Gastrocnemius medialis (tissue), 4 donors: ENCODE measurements at regions of chr6 and their contacts with region 1.

Region 1: GRCh38 chr6:7589949-7590917 is at the start of gene SNRNP48:
- DNase-seq: peak; percentile 92 to 93
- ATAC-seq: peak; percentile 99
- H3K4me3 ChIP-seq: peak within 1 kb of the TSS; percentile 77 to 96 (median 86)
- H3K27ac ChIP-seq: peak within 1 kb of the TSS; percentile 65 to 82 (median 77)
- H3K4me1 ChIP-seq: peaks cover 21 to 23% of the 10 kb centered on the region in 2 donors
- H3K27me3 ChIP-seq: no peaks in the 10 kb centered on the region
- CTCF ChIP-seq: no peak
- POLR2A ChIP-seq: peak; percentile 69 to 70
- total RNA-seq, gene SNRNP48: 14.3 to 16.6 (median 15.3) TPM

Region 2: DNA sequence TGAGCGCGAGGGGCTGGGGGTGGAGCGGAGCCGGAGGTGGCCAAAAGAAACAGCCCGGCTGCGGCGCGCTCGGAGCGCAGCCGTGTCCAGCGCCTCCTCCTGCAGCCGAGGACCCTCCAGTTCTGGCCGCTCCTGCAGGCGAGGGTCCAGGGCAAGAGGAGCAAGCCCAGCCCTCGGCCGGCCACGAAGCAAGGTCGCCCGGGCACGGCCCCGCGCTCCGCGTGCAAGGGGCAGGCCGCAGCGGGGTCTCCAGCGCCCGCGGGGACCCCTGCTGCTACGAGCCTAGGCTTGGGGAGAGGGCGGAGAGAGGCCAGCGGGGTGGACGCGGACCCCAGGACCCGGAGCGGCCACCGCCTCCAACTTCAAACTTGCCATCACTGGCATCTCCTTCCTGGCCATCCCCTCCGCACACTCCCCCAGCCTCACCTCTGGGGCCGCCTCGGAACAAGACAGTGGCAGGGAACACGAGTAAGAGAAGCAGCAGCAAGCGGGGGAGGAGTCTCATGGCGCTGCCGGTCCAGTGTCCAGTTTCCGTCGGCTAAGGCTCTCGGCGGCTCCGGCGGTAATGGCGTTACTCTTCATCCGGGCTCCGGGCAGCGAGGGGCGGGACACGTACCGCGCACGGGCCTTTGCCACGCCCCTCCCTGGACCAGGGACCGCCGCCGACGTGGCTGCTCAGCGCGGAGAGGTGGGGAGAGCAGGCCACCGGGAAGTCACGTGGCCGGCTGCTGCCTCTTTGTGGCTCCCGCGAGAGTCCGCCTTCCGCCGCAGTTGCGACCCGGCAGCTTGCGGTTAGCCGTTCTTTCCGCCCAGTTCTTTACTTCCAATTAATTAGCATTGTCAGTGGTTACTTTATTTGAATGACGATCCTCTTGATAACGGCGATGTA is 277.4 kb before region 1 on chr6 and contains the start of gene SSR1:
- in situ Hi-C with region 1: no loop called
- intact Hi-C with region 1: loop called (anchors 2 kb)
- DNase-seq: peak; percentile 95 to 96
- ATAC-seq: peak; percentile 95 to 97
- H3K4me3 ChIP-seq: peak within 1 kb of the TSS; percentile 83 to 100 (median 96)
- H3K27ac ChIP-seq: peak within 1 kb of the TSS; percentile 85 to 98 (median 96)
- H3K4me1 ChIP-seq: peaks cover 14 to 19% of the 10 kb centered on the region in 2 donors
- H3K27me3 ChIP-seq: no peaks in the 10 kb centered on the region
- CTCF ChIP-seq: no peak
- POLR2A ChIP-seq: peak; percentile 64 to 74
- total RNA-seq, gene SSR1: 11.8 to 36.8 (median 18.6) TPM